Heart right ventricle (tissue), 16 donors: ENCODE measurements at regions of chr2 and their contacts with region 1.

Region 1: DNA sequence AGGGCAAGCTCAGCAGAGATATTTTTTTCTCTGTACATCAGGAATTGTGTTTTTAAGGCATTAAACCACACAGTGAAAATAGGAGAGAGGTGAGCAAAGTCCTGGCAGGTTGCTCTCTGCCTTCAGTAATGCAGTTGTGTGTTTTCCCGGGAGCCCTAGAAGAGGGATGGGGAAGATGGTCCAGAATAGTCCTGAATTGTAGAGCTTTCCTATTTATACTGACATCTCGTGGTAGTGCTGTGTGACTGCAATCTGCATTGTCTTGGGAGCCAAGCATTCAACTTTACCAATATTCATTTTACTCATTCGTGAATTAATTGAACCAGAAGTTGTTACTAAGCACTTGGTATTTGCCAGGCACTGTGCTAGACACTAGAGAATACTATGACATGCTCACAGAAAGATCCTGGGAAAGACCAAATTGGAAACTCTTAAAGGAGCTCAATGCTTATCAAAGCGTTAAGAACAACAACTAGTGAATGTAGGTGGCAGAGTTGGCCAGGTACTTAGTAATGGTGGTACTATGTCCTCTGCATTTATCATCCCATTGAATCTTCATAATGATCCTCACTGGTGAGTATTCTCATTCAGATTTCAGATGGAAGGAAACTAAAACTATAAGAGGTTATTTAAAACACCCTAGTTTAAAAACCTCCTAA is 214.6 kb downstream of the TRIB2 start:
- DNase-seq: peak in 1 of 2 donors; percentile 45
- ATAC-seq: peak; percentile 78 to 88 (median 86)
- H3K4me3 ChIP-seq: no peak overlapping the region
- H3K27ac ChIP-seq: peak overlapping the region in 7 of 10 donors; percentile 0 to 59 (median 7)
- H3K4me1 ChIP-seq: peaks cover 7 to 53% (median 39%) of the 10 kb centered on the region in 9 donors
- H3K27me3 ChIP-seq: no peaks in the 10 kb centered on the region
- CTCF ChIP-seq: peak; percentile 80 to 96 (median 92)

Region 2: GRCh38 chr2:11863513-11864328 is 1067.6 kb before region 1 on chr2:
- intact Hi-C with region 1: loop called in 1 of 10 experiments (anchors 2 kb)
- DNase-seq: peak; percentile 84 to 89
- ATAC-seq: peak; percentile 91 to 96 (median 94)
- H3K4me3 ChIP-seq: peak overlapping the region in 5 of 10 donors; percentile 11 to 31 (median 16)
- H3K27ac ChIP-seq: peak overlapping the region in 9 of 10 donors; percentile 45 to 77 (median 49)
- H3K4me1 ChIP-seq: peaks cover 0 to 23% (median 13%) of the 10 kb centered on the region in 9 donors
- H3K27me3 ChIP-seq: no peaks in the 10 kb centered on the region
- CTCF ChIP-seq: peak; percentile 91 to 99 (median 97)

Region 3: DNA sequence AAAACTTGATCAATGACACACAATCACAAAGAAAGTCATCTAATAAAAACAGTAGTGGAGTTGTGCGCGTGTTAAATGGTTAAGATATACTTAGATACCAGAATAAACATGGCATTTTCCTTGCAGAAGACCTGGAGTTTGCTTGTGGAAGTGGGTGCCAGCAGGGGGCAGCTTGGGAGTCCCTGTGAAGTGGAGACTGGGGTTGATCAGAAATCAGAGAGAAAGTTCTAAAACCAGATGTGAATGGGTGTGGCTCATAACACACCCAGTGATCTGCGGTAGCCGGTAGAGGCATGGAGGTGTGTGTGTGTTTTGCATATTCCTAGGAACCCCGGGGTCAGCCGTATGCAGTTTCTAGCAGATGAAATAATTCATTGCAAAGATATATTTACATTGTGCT is 514.7 kb before region 1 on chr2:
- intact Hi-C with region 1: loop called in 2 of 10 experiments (anchors 10 kb)
- DNase-seq: peak; percentile 40 to 61
- ATAC-seq: peak in 5 of 8 donors; percentile 52 to 65 (median 57)
- H3K4me3 ChIP-seq: no peak overlapping the region
- H3K27ac ChIP-seq: no peak overlapping the region
- H3K4me1 ChIP-seq: peaks cover 0 to 19% (median 0%) of the 10 kb centered on the region in 9 donors
- H3K27me3 ChIP-seq: no peaks in the 10 kb centered on the region
- CTCF ChIP-seq: peak; percentile 24 to 71 (median 59)

Region 4: GRCh38 chr2:12721566-12722446 is 209.5 kb before region 1 on chr2:
- intact Hi-C with region 1: loop called (anchors 1 to 5 kb)
- DNase-seq: no peak
- ATAC-seq: no peak
- H3K4me3 ChIP-seq: peak overlapping the region; percentile 12 to 97 (median 84)
- H3K27ac ChIP-seq: peak overlapping the region in 9 of 10 donors; percentile 97 to 99 (median 99)
- H3K4me1 ChIP-seq: peaks cover 15 to 71% (median 64%) of the 10 kb centered on the region in 9 donors
- H3K27me3 ChIP-seq: peaks cover 0 to 16% (median 0%) of the 10 kb centered on the region in 7 donors
- CTCF ChIP-seq: no peak

Region 5: DNA sequence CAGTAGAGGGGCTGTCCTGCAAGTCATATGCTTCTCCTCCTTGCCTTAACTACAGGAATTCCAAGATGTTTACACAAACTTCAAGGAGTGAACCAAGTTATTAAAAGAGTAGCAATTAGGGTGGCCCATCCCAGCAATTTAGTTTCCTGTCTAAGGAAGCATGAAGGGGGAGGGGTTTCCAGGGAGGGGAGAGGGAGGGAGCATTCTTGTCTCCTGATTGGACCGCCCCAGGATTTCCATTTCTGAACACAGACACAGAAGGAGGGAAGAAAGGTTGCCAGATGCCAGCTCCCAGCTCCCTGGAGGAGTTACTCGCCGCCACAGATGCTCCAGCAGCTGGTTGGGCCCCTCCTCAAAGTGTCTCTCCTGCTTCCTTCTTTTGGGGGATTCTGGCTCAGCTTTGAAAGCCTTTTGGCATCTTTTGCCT is 107.0 kb before region 1 on chr2:
- intact Hi-C with region 1: loop called in 2 of 10 experiments (anchors 5 to 10 kb)
- DNase-seq: peak; percentile 35 to 78
- ATAC-seq: peak; percentile 65 to 86 (median 76)
- H3K4me3 ChIP-seq: peak overlapping the region in 1 of 10 donors; percentile 3
- H3K27ac ChIP-seq: peak overlapping the region; percentile 55 to 96 (median 90)
- H3K4me1 ChIP-seq: peaks cover 12 to 50% (median 41%) of the 10 kb centered on the region in 9 donors
- H3K27me3 ChIP-seq: no peaks in the 10 kb centered on the region
- CTCF ChIP-seq: no peak

Region 6: DNA sequence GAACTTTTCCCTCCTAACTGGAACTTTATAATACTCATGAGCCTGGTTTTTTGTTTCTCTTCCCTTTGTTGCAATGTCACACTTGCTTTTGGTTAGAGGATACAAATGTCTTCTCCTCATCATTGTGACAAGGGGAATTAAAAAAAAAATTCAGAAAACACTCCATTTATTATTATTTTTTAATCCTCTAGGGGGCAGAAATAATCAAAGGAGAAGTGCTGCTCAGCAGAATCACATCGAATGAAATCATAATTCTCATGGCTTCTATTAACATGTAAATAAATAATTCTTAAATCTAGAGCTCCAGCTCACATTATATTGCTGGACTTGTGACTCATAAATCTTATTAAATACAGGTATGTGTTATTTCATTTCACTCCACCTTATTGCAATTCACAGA is 59.2 kb after region 1 on chr2:
- intact Hi-C with region 1: loop called in 2 of 10 experiments (anchors 5 to 10 kb)
- DNase-seq: no peak
- ATAC-seq: no peak
- H3K4me3 ChIP-seq: no peak overlapping the region
- H3K27ac ChIP-seq: no peak overlapping the region
- H3K4me1 ChIP-seq: no peaks in the 10 kb centered on the region
- H3K27me3 ChIP-seq: no peaks in the 10 kb centered on the region
- CTCF ChIP-seq: peak in 7 of 9 donors; percentile 15 to 50 (median 36)

Region 7: GRCh38 chr2:13006829-13007717 is 75.8 kb after region 1 on chr2:
- intact Hi-C with region 1: loop called in 6 of 10 experiments (anchors 2 to 10 kb)
- DNase-seq: peak; percentile 25 to 79
- ATAC-seq: peak; percentile 91 to 95 (median 92)
- H3K4me3 ChIP-seq: peak overlapping the region in 7 of 10 donors; percentile 4 to 39 (median 34)
- H3K27ac ChIP-seq: peak overlapping the region in 9 of 10 donors; percentile 11 to 66 (median 42)
- H3K4me1 ChIP-seq: peaks cover 2 to 38% (median 21%) of the 10 kb centered on the region in 9 donors
- H3K27me3 ChIP-seq: no peaks in the 10 kb centered on the region
- CTCF ChIP-seq: peak; percentile 77 to 95 (median 90)